Body of pancreas (tissue), 4 donors: ENCODE measurements at regions of chr2 and their contacts with region 1.

Region 1: GRCh38 chr2:43219383-43220228 is 6.8 kb downstream of the ZFP36L2 start:
- DNase-seq: peak; percentile 89 to 94 (median 92)
- ATAC-seq: peak; percentile 79
- H3K4me3 ChIP-seq: no peak overlapping the region
- H3K27ac ChIP-seq: peak overlapping the region; percentile 88 to 98 (median 97)
- H3K4me1 ChIP-seq: peaks cover 58% of the 10 kb centered on the region
- H3K27me3 ChIP-seq: no peaks in the 10 kb centered on the region
- CTCF ChIP-seq: peak in 2 of 7 experiments; percentile 0 to 8
- POLR2A ChIP-seq: peak; percentile 40 to 75 (median 75)

Region 2: GRCh38 chr2:43032213-43033015 is 187.2 kb before region 1 on chr2:
- intact Hi-C with region 1: loop called (anchors 10 kb)
- DNase-seq: peak; percentile 60 to 79 (median 78)
- ATAC-seq: peak; percentile 89
- H3K4me3 ChIP-seq: no peak overlapping the region
- H3K27ac ChIP-seq: peak overlapping the region; percentile 36 to 80 (median 74)
- H3K4me1 ChIP-seq: peaks cover 18% of the 10 kb centered on the region
- H3K27me3 ChIP-seq: no peaks in the 10 kb centered on the region
- CTCF ChIP-seq: no peak
- POLR2A ChIP-seq: no peak

Region 3: DNA sequence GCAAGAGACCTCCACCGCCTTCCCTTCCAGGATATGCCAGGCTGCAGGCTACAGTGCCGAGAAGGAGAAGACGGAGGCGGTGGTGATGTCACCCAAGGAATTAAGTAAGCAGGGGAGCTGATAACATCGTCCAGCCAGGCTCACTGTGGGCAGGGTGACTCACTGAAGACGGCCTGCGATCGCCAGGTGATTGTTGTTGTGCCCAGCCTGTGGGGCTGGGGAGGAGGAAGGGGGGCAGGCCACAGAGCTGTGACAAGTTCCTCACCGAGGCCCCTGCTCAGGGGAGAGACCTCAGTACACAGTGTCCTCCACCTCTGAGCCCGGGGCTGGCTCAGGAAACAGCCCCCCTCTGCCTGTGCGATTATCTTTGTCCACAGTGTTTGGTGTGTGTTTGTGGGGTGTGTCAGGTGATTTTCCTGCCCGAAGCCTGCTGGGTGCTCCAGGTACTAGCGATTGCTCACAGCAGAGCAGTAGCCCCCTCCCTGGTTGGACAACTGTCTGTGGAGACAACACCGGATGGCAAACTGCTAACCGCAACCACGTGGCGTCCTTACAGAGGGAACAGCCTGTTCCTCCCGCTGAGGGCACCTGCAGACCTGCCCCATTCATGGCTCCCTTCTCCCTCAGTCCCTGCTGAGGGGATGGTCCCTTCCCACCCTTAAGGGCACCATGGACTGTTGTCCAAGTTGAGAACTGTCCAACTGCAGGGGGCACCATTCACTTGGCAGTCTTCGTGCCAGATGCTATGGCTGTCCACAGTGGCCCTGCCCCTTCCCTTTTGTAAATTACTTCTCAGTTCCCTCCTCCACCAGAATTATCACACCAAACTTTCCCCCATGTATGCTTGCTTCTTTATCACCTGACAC is 88.3 kb before region 1 on chr2:
- intact Hi-C with region 1: no loop called
- DNase-seq: peak; percentile 75 to 87 (median 82)
- ATAC-seq: peak; percentile 79
- H3K4me3 ChIP-seq: no peak overlapping the region
- H3K27ac ChIP-seq: peak overlapping the region; percentile 6 to 77 (median 53)
- H3K4me1 ChIP-seq: peaks cover 32% of the 10 kb centered on the region
- H3K27me3 ChIP-seq: no peaks in the 10 kb centered on the region
- CTCF ChIP-seq: peak in 6 of 7 experiments; percentile 17 to 63 (median 42)
- POLR2A ChIP-seq: peak in 2 of 3 donors; percentile 10 to 27

Region 4: DNA sequence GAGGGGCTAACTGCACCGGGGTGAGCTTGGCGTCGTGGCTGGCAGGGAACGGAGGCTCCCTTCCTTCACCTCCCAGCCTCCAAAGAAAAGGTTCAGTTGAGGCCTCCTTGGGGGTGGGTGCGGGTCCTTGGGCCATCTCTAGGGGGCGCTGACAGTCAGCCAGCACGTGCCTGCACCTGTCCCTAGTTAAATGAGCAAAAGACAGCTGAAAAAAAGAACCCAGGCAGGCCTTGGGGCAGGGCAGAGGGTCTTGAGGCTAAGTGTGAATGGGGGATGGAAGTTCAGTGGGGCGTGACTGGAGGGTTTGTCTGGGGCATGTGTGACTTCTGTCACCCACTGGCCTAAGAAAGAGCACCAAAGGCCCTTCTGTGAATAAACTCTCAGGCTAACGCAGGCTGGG is 49.6 kb before region 1 on chr2:
- intact Hi-C with region 1: loop called (anchors 10 kb)
- DNase-seq: peak; percentile 38 to 68 (median 64)
- ATAC-seq: peak; percentile 20
- H3K4me3 ChIP-seq: no peak overlapping the region
- H3K27ac ChIP-seq: peak overlapping the region in 3 of 4 donors; percentile 82 to 87 (median 85)
- H3K4me1 ChIP-seq: peaks cover 37% of the 10 kb centered on the region
- H3K27me3 ChIP-seq: no peaks in the 10 kb centered on the region
- CTCF ChIP-seq: peak; percentile 32 to 72 (median 61)
- POLR2A ChIP-seq: no peak

Region 5: DNA sequence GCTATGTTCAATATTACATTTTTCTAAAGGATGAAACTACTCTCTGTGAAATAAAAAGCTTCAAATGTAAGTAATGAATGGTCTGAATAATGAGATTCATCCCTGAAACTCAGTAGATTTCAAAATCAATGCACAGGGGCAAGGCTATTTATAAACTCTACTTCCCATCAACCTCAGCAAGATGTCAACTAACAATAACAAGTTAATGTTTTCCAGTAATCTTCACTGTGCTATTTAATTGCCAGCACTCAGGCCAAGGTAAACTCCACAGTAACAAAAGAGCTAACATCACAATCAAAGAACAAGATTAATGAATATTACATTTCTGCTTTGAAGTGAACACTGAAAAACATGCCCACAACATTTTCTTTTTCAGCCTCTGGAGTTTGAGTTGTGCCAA is 151.1 kb after region 1 on chr2:
- intact Hi-C with region 1: no loop called
- DNase-seq: peak in 1 of 4 donors; percentile 18
- ATAC-seq: peak; percentile 81
- H3K4me3 ChIP-seq: no peak overlapping the region
- H3K27ac ChIP-seq: peak overlapping the region in 1 of 4 donors; percentile 63
- H3K4me1 ChIP-seq: peaks cover 23% of the 10 kb centered on the region
- H3K27me3 ChIP-seq: no peaks in the 10 kb centered on the region
- CTCF ChIP-seq: no peak
- POLR2A ChIP-seq: no peak